SK-N-SH (cell line): ENCODE measurements at regions of chr1 and their contacts with region 1.

Region 1: DNA sequence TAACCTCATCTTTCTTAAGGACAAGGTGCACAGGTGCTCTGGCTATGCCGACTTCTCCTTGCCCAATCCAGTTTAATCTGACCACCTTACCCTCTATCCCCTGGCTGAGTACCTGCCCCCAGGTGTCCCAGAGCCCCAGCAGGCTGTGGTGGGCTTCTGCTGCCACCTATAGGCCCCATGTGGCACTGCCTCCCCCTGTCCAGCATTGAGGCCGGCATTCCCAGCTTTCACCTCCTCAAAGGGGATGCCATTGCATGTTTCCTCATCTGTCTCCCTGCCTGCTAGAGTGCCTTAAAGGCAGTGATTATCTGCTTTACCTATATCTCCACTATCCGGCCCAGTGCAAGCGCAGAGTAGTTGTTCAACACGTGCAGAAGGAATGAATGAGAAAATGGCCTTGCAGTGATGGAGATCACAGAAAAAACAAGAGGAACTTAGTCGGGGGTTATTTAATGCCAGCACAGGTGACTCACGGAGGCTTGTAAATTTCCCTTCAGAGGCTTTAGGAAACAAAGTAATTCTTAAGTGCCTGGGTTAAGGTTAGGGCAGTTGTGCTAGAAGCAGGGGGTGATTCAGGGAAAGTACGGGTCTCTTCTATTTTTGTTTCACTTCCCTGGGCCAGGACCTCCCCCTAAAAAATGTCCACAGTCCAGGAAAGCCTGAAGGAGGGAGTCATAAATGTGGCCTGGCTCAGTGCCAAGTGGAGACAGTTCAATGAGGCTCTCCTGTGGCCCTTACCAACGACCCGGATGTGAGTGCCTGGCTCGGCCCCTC is 131.8 kb upstream of the NGF start:
- DNase-seq: peak; percentile 77
- H3K4me3 ChIP-seq: peak overlapping the region in 1 of 2 experiments; percentile 50; a peak in 1 of 4 replicates
- H3K27ac ChIP-seq: peak overlapping the region in 1 of 2 experiments; percentile 64; a peak in 3 of 4 replicates
- H3K4me1 ChIP-seq: peaks cover 8 to 9% of the 10 kb centered on the region in 2 experiments; a peak in 1 of 4 replicates
- H3K27me3 ChIP-seq: no peaks in the 10 kb centered on the region
- CTCF ChIP-seq: peak; percentile 97
- EP300 ChIP-seq: no peak
- RAD21 ChIP-seq: peak; percentile 95

Region 2: GRCh38 chr1:115275212-115275611 is 194.7 kb before region 1 on chr1:
- CTCF ChIA-PET with region 1: interaction called, 12 read pairs
- POLR2A ChIA-PET with region 1: no interaction called
- DNase-seq: no peak
- H3K4me3 ChIP-seq: no peak overlapping the region
- H3K27ac ChIP-seq: no peak overlapping the region
- H3K4me1 ChIP-seq: peaks cover 4 to 16% of the 10 kb centered on the region in 2 experiments; a peak in 2 of 4 replicates
- H3K27me3 ChIP-seq: no peaks in the 10 kb centered on the region
- CTCF ChIP-seq: peak; percentile 48
- EP300 ChIP-seq: no peak
- RAD21 ChIP-seq: peak; percentile 57

Region 3: DNA sequence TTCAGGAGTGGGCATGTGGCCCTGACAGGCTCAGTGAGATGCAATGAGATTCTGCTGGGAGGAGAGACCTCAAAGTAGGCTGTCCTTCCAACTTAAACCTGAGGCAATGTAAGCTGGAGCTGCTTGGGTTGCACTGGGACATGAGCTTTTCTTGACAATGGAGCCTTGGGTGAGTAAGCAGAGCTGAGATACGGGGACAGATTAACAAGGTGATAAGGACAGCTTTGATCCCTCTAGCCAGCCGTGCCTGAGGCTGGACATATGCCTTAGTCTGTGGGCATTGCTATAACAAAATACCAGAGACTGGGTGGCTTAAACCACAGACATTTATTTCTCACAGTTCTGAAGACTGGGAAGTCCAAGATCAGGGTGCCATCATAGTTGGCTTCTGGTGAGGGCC is 113.5 kb before region 1 on chr1:
- CTCF ChIA-PET with region 1: interaction called, 12 read pairs
- POLR2A ChIA-PET with region 1: no interaction called
- DNase-seq: peak; percentile 43
- H3K4me3 ChIP-seq: no peak overlapping the region
- H3K27ac ChIP-seq: no peak overlapping the region
- H3K4me1 ChIP-seq: peaks cover 0 to 16% of the 10 kb centered on the region in 2 experiments; a peak in 2 of 4 replicates
- H3K27me3 ChIP-seq: no peaks in the 10 kb centered on the region
- CTCF ChIP-seq: no peak
- EP300 ChIP-seq: no peak
- RAD21 ChIP-seq: no peak

Region 4: GRCh38 chr1:115450501-115451040 is 19.3 kb before region 1 on chr1:
- CTCF ChIA-PET with region 1: interaction called, 13 read pairs
- POLR2A ChIA-PET with region 1: interaction called, 3 read pairs
- DNase-seq: no peak
- H3K4me3 ChIP-seq: no peak overlapping the region
- H3K27ac ChIP-seq: no peak overlapping the region
- H3K4me1 ChIP-seq: peaks cover 0 to 5% of the 10 kb centered on the region in 2 experiments; a peak in 2 of 4 replicates
- H3K27me3 ChIP-seq: no peaks in the 10 kb centered on the region
- CTCF ChIP-seq: no peak
- EP300 ChIP-seq: no peak
- RAD21 ChIP-seq: no peak